H1 (cell line): ENCODE measurements at regions of chr4 and their contacts with region 1.

Region 1: DNA sequence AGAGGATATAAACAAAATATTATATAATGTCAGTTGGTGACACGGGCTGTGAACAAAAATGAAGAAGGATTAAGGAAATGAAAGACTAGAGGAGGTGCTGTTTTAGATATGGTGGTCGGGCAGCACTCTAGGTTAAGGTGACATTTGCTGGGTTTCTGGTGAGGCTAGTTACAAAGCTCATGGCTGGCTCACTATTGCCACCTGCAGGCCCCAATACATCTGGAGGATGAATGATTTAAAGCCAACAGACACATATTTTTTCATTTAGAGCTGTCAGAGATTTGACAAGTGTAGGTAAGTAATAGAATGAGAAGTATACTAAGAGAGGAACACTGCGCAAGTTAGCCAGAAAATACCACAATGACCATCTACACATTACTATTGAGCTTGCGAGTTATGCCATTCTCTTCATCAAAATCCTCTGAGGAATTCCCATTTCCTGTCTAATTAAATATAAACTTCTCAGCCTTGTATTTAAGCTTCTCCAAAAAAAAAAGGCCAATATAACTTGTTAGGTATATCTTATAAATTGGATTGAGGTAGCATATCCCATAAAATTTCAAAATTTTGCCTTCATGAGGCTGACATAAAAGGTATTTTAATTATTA is 6.4 kb upstream of the FGG start:
- DNase-seq: peak; percentile 27 to 59
- H3K4me3 ChIP-seq: no peak overlapping the region
- H3K27ac ChIP-seq: no peak overlapping the region
- H3K4me1 ChIP-seq: no peaks in the 10 kb centered on the region
- H3K27me3 ChIP-seq: peaks cover 0 to 1% (median 0%) of the 10 kb centered on the region in 4 experiments; a peak in 1 of 7 replicates
- CTCF ChIP-seq: peak; percentile 25 to 77 (median 72)
- EP300 ChIP-seq: no peak
- POLR2A ChIP-seq: no peak
- RAD21 ChIP-seq: peak; percentile 79 to 82

Region 2: GRCh38 chr4:154124539-154125255 is 494.1 kb before region 1 on chr4:
- CTCF ChIA-PET with region 1: no interaction called
- POLR2A ChIA-PET with region 1: no interaction called
- DNase-seq: no peak
- H3K4me3 ChIP-seq: no peak overlapping the region
- H3K27ac ChIP-seq: no peak overlapping the region
- H3K4me1 ChIP-seq: no peaks in the 10 kb centered on the region
- H3K27me3 ChIP-seq: no peaks in the 10 kb centered on the region
- CTCF ChIP-seq: no peak
- EP300 ChIP-seq: no peak
- POLR2A ChIP-seq: no peak
- RAD21 ChIP-seq: no peak

Region 3: DNA sequence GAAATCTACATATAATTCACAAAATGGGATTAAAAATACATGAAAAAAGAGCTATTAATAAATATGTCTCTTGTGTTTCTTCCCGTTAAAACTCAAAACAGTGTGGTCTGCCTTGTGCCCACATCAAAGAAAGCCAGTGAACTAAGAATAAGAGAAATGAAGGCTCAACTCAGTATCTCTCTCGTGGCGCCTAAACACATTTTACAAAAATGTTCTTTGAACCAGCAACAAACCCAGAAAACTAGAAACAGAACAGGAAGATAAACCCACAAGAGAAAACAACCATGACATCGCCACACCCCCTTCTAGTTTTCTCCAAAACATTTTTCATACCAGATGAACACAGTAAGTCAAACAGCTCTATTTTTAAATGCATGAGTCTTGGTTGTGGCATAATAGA is 257.4 kb before region 1 on chr4:
- CTCF ChIA-PET with region 1: no interaction called
- POLR2A ChIA-PET with region 1: no interaction called
- DNase-seq: no peak
- H3K4me3 ChIP-seq: no peak overlapping the region
- H3K27ac ChIP-seq: no peak overlapping the region
- H3K4me1 ChIP-seq: no peaks in the 10 kb centered on the region
- H3K27me3 ChIP-seq: no peaks in the 10 kb centered on the region
- CTCF ChIP-seq: no peak
- EP300 ChIP-seq: no peak
- POLR2A ChIP-seq: no peak
- RAD21 ChIP-seq: no peak

Region 4: GRCh38 chr4:154478128-154478527 is 140.7 kb before region 1 on chr4:
- CTCF ChIA-PET with region 1: no interaction called
- POLR2A ChIA-PET with region 1: no interaction called
- DNase-seq: no peak
- H3K4me3 ChIP-seq: no peak overlapping the region
- H3K27ac ChIP-seq: no peak overlapping the region
- H3K4me1 ChIP-seq: no peaks in the 10 kb centered on the region
- H3K27me3 ChIP-seq: no peaks in the 10 kb centered on the region
- CTCF ChIP-seq: no peak
- EP300 ChIP-seq: no peak
- POLR2A ChIP-seq: no peak
- RAD21 ChIP-seq: no peak

Region 5: DNA sequence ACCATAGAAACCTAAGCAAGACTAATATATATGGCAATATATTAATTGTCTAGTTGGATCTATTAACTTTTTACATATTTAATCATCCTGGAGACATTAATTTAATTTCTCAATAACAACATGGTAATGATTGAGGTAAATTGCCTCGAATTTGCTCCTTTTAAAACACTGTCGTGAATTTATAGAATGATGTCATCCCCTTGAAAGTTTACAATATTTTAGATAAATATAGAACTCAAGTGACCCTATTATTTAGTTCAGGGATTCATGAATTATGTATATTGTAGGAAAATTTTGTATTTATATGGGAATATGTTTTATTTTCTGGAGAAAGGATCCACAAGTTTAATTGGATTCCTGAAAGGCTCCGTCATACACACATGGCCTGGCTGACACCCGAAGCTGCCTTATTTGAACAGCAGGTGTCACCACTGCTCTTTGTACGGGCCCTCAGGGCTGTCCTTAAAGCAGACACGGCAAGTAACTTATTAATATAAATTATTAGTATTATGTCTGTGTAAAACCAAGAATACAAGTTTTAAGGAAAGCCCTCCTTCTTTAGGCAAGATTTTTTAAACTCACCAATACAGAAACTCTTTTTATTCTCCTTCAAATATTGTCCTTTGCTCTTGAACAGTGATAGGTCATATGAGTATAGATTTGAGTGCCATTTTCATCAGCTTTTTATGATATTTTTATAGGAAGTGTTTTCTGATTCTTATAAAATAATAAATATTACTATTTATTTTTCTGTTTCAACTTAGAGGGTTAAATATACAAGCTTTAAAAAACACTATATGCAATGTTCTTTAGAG is 66.7 kb before region 1 on chr4:
- CTCF ChIA-PET with region 1: interaction called, 283 read pairs
- POLR2A ChIA-PET with region 1: interaction called, 3 read pairs
- DNase-seq: peak in 1 of 2 experiments; percentile 54
- H3K4me3 ChIP-seq: no peak overlapping the region
- H3K27ac ChIP-seq: no peak overlapping the region
- H3K4me1 ChIP-seq: no peaks in the 10 kb centered on the region; a peak in 1 of 7 replicates
- H3K27me3 ChIP-seq: no peaks in the 10 kb centered on the region; a peak in 1 of 7 replicates
- CTCF ChIP-seq: peak; percentile 69 to 76 (median 69)
- EP300 ChIP-seq: no peak
- POLR2A ChIP-seq: no peak
- RAD21 ChIP-seq: peak; percentile 86 to 87

Region 6: GRCh38 chr4:154566639-154567204 is 52.1 kb before region 1 on chr4:
- CTCF ChIA-PET with region 1: interaction called, 47 read pairs
- POLR2A ChIA-PET with region 1: no interaction called
- DNase-seq: no peak
- H3K4me3 ChIP-seq: no peak overlapping the region
- H3K27ac ChIP-seq: no peak overlapping the region
- H3K4me1 ChIP-seq: no peaks in the 10 kb centered on the region
- H3K27me3 ChIP-seq: no peaks in the 10 kb centered on the region
- CTCF ChIP-seq: no peak
- EP300 ChIP-seq: no peak
- POLR2A ChIP-seq: no peak
- RAD21 ChIP-seq: no peak

Region 7: DNA sequence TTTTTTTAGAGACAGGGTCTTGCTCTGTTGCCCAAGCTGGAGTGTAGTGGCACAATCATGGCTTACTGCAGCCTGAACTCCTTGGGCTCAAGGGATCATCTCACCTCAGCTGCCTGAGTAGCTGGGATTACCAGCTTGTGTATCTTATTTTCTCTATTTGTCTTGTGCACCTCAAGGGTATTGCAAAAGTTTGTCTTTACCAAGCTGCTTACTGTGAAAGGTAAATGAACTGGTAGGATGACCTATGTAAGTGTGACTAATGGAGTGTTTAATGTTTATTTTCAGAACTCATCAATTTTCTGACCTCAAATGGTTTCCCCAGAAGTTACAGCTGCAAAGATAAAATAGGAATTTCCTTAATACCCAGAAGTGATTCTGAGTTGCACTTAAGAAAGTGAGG is 23.0 kb before region 1 on chr4:
- CTCF ChIA-PET with region 1: interaction called, 30 read pairs
- POLR2A ChIA-PET with region 1: no interaction called
- DNase-seq: no peak
- H3K4me3 ChIP-seq: no peak overlapping the region
- H3K27ac ChIP-seq: no peak overlapping the region
- H3K4me1 ChIP-seq: no peaks in the 10 kb centered on the region
- H3K27me3 ChIP-seq: no peaks in the 10 kb centered on the region
- CTCF ChIP-seq: no peak
- EP300 ChIP-seq: no peak
- POLR2A ChIP-seq: no peak
- RAD21 ChIP-seq: no peak

Region 8: GRCh38 chr4:154779362-154779947 is 160.6 kb after region 1 on chr4:
- CTCF ChIA-PET with region 1: interaction called, 10 read pairs
- POLR2A ChIA-PET with region 1: no interaction called
- DNase-seq: no peak
- H3K4me3 ChIP-seq: no peak overlapping the region
- H3K27ac ChIP-seq: no peak overlapping the region
- H3K4me1 ChIP-seq: no peaks in the 10 kb centered on the region
- H3K27me3 ChIP-seq: no peaks in the 10 kb centered on the region
- CTCF ChIP-seq: peak in 2 of 3 experiments; percentile 58; a peak in 2 of 4 replicates
- EP300 ChIP-seq: no peak
- POLR2A ChIP-seq: no peak
- RAD21 ChIP-seq: peak; percentile 73 to 74

Region 9: GRCh38 chr4:154989511-154989910 is 370.7 kb after region 1 on chr4:
- CTCF ChIA-PET with region 1: no interaction called
- POLR2A ChIA-PET with region 1: no interaction called
- DNase-seq: no peak
- H3K4me3 ChIP-seq: no peak overlapping the region
- H3K27ac ChIP-seq: no peak overlapping the region
- H3K4me1 ChIP-seq: no peaks in the 10 kb centered on the region
- H3K27me3 ChIP-seq: no peaks in the 10 kb centered on the region
- CTCF ChIP-seq: peak in 1 of 3 experiments; percentile 4; a peak in 1 of 4 replicates
- EP300 ChIP-seq: no peak
- POLR2A ChIP-seq: no peak
- RAD21 ChIP-seq: peak; percentile 6 to 20; a peak in 1 of 4 replicates